GM12878 (cell line): ENCODE measurements at regions of chr21 and their contacts with region 1.

Region 1: DNA sequence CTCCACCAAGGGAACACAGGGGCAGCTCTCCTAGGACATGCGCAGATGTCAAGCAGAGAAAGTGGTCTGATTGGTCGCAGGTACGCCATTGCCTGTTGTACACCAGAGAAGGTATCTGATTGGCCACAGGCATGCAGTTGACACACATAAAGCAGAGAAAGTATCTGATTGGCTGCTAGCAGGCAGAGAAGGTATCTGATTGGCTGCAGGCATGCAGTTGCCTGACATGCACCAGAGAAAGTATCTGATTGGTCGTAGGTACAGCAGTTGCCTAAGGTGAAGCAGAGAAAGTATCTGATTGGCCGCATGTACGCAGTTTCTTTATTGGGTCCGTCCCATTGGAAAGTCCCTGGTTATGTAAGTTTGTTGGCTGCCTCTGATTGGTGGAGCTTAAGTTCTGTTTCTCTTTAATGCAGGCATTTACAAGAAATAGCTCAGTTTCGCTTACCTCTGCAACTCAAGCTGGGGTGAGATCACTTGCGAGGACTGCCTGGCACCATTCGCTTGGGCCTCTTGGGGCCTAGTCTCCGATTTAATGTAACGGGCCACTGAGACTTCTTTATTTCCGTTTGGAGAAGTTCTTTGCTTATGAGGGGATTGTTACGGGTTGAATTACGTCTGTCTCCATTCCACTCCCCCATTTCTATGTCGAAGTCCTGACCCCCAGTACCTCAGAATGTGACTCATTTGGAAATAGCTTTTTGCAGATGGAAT is 74.2 kb downstream of the SIK1 start:
- DNase-seq: peak; percentile 100
- ATAC-seq: peak; percentile 82
- H3K4me3 ChIP-seq: peak overlapping the region; percentile 62
- H3K27ac ChIP-seq: peak overlapping the region; percentile 100
- H3K4me1 ChIP-seq: peaks cover 44% of the 10 kb centered on the region
- H3K27me3 ChIP-seq: no peaks in the 10 kb centered on the region
- CTCF ChIP-seq: no peak
- EP300 ChIP-seq: peak in 1 of 2 experiments; percentile 82; a peak in 2 of 4 replicates
- POLR2A ChIP-seq: no peak
- RAD21 ChIP-seq: 0 out of 2 replicates have a peak, but pooled peaks have one; percentile 10

Region 2: GRCh38 chr21:43306911-43307676 is 45.6 kb before region 1 on chr21:
- CTCF ChIA-PET with region 1: interaction called, 3 read pairs
- POLR2A ChIA-PET with region 1: no interaction called
- RAD21 ChIA-PET with region 1: interaction called, 7 read pairs
- SMC1A ChIA-PET with region 1: interaction called, 4 read pairs
- in situ Hi-C with region 1: no loop called
- intact Hi-C with region 1: loop called (anchors 2 kb)
- DNase-seq: peak; percentile 39
- ATAC-seq: peak; percentile 88
- H3K4me3 ChIP-seq: no peak overlapping the region
- H3K27ac ChIP-seq: no peak overlapping the region
- H3K4me1 ChIP-seq: peaks cover 15% of the 10 kb centered on the region
- H3K27me3 ChIP-seq: no peaks in the 10 kb centered on the region
- CTCF ChIP-seq: no peak
- EP300 ChIP-seq: no peak
- POLR2A ChIP-seq: no peak
- RAD21 ChIP-seq: no peak

Region 3: DNA sequence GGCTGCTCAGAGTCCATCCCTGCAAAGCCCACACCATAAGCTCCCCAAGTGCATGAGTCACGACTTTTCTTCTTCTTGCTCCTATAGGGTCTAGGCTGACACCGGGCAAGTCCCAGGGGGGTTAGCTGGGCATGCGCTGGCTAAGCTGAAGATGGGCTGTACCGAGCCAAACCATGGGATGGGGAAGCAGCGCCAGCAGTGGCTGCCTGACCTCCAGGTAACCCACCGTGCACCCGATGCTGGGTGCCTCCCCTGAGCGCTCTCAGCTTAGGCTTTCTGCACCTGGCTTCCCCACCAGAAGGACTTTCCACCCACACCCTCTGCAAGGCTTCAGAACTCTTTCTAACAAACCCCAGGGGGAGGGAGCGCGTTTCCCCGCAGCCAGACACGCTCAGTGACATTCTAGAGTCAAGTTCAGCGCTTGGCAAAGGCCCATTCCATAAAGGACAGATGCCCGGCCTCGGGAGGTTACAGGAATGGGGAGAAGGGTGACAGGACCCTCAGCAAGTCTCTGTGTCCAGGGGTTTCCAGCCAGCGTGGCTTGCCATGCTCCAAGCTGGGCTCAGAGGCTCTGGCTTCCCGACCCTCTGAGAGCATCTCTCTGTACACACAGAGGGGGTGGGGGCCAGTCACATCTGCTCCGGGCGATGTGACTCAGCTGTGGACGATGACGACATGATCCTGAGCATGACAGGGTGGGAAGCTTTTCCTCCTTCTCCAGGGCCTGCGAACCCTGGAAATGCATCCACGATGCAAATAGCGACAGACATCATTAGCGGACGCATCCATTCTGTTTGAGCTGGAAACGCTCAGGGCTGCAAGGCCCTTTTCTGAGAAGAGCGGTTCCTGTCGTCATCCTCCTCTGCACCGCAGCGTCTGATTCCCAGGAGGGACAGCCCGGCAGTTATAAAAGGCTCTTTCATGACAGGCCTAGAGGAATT is 33.6 kb before region 1 on chr21:
- CTCF ChIA-PET with region 1: interaction called, 3 read pairs
- POLR2A ChIA-PET with region 1: interaction called, 4 read pairs
- RAD21 ChIA-PET with region 1: interaction called, 11 read pairs
- SMC1A ChIA-PET with region 1: interaction called, 3 read pairs
- in situ Hi-C with region 1: no loop called
- intact Hi-C with region 1: no loop called
- DNase-seq: peak; percentile 19
- ATAC-seq: peak; percentile 67
- H3K4me3 ChIP-seq: no peak overlapping the region
- H3K27ac ChIP-seq: no peak overlapping the region
- H3K4me1 ChIP-seq: peaks cover 16% of the 10 kb centered on the region
- H3K27me3 ChIP-seq: no peaks in the 10 kb centered on the region
- CTCF ChIP-seq: no peak
- EP300 ChIP-seq: no peak
- POLR2A ChIP-seq: no peak
- RAD21 ChIP-seq: no peak

Region 4: DNA sequence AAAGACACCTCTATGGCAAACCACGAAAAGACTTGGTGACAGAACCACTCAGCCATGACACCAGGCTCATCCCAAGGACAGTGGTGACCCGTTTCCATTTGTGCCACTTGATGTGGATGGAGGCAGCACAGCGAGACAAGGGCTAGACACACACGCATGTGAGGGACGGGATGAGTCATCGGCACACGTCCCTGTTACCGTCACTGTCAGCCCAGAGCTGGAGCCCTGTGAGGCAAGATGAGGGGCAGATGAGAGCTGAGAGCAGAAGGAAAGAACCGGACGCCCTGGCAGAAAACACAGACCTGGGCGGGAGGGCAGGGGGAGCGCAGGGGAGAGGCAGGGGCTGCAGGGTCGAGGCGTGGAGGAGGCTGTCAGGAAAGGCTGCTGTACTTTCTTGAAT is 16.4 kb after region 1 on chr21:
- CTCF ChIA-PET with region 1: interaction called, 12 read pairs
- POLR2A ChIA-PET with region 1: interaction called, 6 read pairs
- RAD21 ChIA-PET with region 1: no interaction called
- SMC1A ChIA-PET with region 1: interaction called, 5 read pairs
- in situ Hi-C with region 1: no loop called
- intact Hi-C with region 1: no loop called
- DNase-seq: no peak
- ATAC-seq: peak; percentile 95
- H3K4me3 ChIP-seq: no peak overlapping the region
- H3K27ac ChIP-seq: no peak overlapping the region
- H3K4me1 ChIP-seq: peaks cover 22% of the 10 kb centered on the region
- H3K27me3 ChIP-seq: no peaks in the 10 kb centered on the region; a peak in 2 of 4 replicates
- CTCF ChIP-seq: no peak
- EP300 ChIP-seq: peak; percentile 45 to 58; a peak in 3 of 4 replicates
- POLR2A ChIP-seq: no peak
- RAD21 ChIP-seq: no peak

Region 5: GRCh38 chr21:43681650-43682049 is 328.9 kb after region 1 on chr21:
- CTCF ChIA-PET with region 1: no interaction called
- POLR2A ChIA-PET with region 1: no interaction called
- RAD21 ChIA-PET with region 1: no interaction called
- SMC1A ChIA-PET with region 1: no interaction called
- in situ Hi-C with region 1: no loop called
- intact Hi-C with region 1: no loop called
- DNase-seq: no peak
- ATAC-seq: no peak
- H3K4me3 ChIP-seq: no peak overlapping the region
- H3K27ac ChIP-seq: no peak overlapping the region
- H3K4me1 ChIP-seq: no peaks in the 10 kb centered on the region
- H3K27me3 ChIP-seq: no peaks in the 10 kb centered on the region
- CTCF ChIP-seq: no peak
- EP300 ChIP-seq: no peak
- POLR2A ChIP-seq: no peak
- RAD21 ChIP-seq: no peak